Heart right ventricle (tissue), 16 donors: ENCODE measurements at regions of chr14 and their contacts with region 1.

Region 1: DNA sequence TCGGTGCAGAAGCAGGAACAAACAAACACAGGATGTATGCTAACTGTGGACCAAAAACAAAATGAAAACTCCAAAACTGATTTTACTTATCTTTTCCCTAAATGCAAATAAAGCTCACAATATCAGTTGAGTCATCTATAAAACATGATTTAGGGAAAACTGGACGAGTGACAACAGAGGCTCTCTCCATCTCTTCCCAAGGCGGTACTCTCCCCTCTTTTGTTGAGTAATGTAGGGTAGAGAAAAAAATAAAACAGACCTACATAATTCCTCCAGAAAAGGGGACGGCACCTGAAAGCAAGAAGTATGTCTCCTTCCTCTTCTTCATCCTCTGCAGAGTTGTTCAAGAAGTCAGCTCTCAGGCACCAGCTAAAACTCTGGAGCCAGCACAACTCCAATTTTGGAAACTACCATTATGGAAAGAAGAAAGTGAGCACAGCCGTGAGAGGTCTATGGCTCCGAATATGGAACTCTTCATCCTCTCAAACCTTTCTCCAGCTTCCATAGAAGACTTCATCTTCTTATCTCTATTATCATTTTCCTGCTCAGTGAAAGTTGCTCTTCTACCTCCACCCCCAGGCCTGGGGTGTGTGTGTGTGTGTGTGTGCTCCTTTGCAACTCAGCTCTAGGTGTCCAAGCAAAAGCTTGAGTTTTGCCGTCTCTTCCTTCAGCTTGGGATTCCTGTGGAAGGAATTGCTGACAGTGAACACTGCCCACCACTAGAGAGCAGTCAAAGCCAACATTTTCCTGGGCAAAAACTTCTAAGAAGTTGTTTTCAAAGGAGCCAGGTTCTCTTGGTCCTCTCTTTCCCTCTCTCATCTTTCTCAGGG is 155.4 kb downstream of the DIO2 start:
- DNase-seq: peak in 1 of 2 donors; percentile 36
- ATAC-seq: peak in 7 of 8 donors; percentile 33 to 80 (median 69)
- H3K4me3 ChIP-seq: no peak overlapping the region
- H3K27ac ChIP-seq: no peak overlapping the region
- H3K4me1 ChIP-seq: no peaks in the 10 kb centered on the region
- H3K27me3 ChIP-seq: no peaks in the 10 kb centered on the region
- CTCF ChIP-seq: peak; percentile 18 to 67 (median 57)

Region 2: DNA sequence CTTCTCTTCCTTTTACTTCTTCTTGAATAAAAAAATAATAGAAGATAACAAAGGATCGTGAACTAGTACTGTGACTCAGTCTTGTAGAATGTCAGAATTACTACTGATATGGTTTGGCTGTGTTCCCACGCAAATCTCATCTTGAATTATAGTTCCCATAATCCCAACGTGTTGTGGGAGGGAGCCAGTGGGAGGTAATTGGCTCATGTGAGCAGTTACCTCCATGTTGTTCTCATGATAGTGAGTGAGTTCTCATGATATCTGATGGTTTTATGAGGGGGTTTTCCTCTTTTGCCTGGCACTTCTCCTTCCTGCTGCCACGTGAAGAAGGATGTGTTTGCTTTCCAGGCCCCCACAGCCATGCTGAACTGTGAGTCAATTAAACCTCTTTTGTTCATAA is 394.1 kb before region 1 on chr14:
- intact Hi-C with region 1: no loop called
- DNase-seq: no peak
- ATAC-seq: no peak
- H3K4me3 ChIP-seq: no peak overlapping the region
- H3K27ac ChIP-seq: no peak overlapping the region
- H3K4me1 ChIP-seq: no peaks in the 10 kb centered on the region
- H3K27me3 ChIP-seq: no peaks in the 10 kb centered on the region
- CTCF ChIP-seq: no peak

Region 3: GRCh38 chr14:79758985-79759384 is 296.9 kb before region 1 on chr14:
- intact Hi-C with region 1: no loop called
- DNase-seq: no peak
- ATAC-seq: no peak
- H3K4me3 ChIP-seq: no peak overlapping the region
- H3K27ac ChIP-seq: no peak overlapping the region
- H3K4me1 ChIP-seq: no peaks in the 10 kb centered on the region
- H3K27me3 ChIP-seq: no peaks in the 10 kb centered on the region
- CTCF ChIP-seq: no peak

Region 4: GRCh38 chr14:80356413-80356812 is 300.5 kb after region 1 on chr14:
- intact Hi-C with region 1: loop called in 1 of 10 experiments (anchors 10 kb)
- DNase-seq: no peak
- ATAC-seq: no peak
- H3K4me3 ChIP-seq: no peak overlapping the region
- H3K27ac ChIP-seq: no peak overlapping the region
- H3K4me1 ChIP-seq: no peaks in the 10 kb centered on the region
- H3K27me3 ChIP-seq: no peaks in the 10 kb centered on the region
- CTCF ChIP-seq: no peak

Region 5: GRCh38 chr14:80587075-80587724 is 531.3 kb after region 1 on chr14:
- intact Hi-C with region 1: loop called in 2 of 10 experiments (anchors 5 to 10 kb)
- DNase-seq: no peak
- ATAC-seq: peak in 1 of 8 donors; percentile 46
- H3K4me3 ChIP-seq: no peak overlapping the region
- H3K27ac ChIP-seq: no peak overlapping the region
- H3K4me1 ChIP-seq: peaks cover 0 to 10% (median 0%) of the 10 kb centered on the region in 9 donors
- H3K27me3 ChIP-seq: no peaks in the 10 kb centered on the region
- CTCF ChIP-seq: peak in 7 of 9 donors; percentile 15 to 49 (median 34)

Region 6: GRCh38 chr14:80784820-80785219 is 728.9 kb after region 1 on chr14:
- intact Hi-C with region 1: loop called in 1 of 10 experiments (anchors 5 kb)
- DNase-seq: no peak
- ATAC-seq: peak in 2 of 8 donors; percentile 48 to 59
- H3K4me3 ChIP-seq: no peak overlapping the region
- H3K27ac ChIP-seq: no peak overlapping the region
- H3K4me1 ChIP-seq: no peaks in the 10 kb centered on the region
- H3K27me3 ChIP-seq: no peaks in the 10 kb centered on the region
- CTCF ChIP-seq: peak in 3 of 9 donors; percentile 17 to 22 (median 19)

Region 7: GRCh38 chr14:80850197-80850814 is 794.4 kb after region 1 on chr14:
- intact Hi-C with region 1: loop called in 5 of 10 experiments (anchors 5 to 10 kb)
- DNase-seq: no peak
- ATAC-seq: no peak
- H3K4me3 ChIP-seq: no peak overlapping the region
- H3K27ac ChIP-seq: no peak overlapping the region
- H3K4me1 ChIP-seq: peaks cover 0 to 4% (median 0%) of the 10 kb centered on the region in 9 donors
- H3K27me3 ChIP-seq: no peaks in the 10 kb centered on the region
- CTCF ChIP-seq: peak; percentile 29 to 74 (median 62)

Region 8: GRCh38 chr14:80987235-80988032 is 931.6 kb after region 1 on chr14:
- intact Hi-C with region 1: loop called in 2 of 10 experiments (anchors 10 kb)
- DNase-seq: peak in 1 of 2 donors; percentile 63
- ATAC-seq: peak in 7 of 8 donors; percentile 52 to 80 (median 74)
- H3K4me3 ChIP-seq: no peak overlapping the region
- H3K27ac ChIP-seq: no peak overlapping the region
- H3K4me1 ChIP-seq: no peaks in the 10 kb centered on the region
- H3K27me3 ChIP-seq: peaks cover 0 to 35% (median 19%) of the 10 kb centered on the region in 7 donors
- CTCF ChIP-seq: peak; percentile 74 to 97 (median 92)